Posterior vena cava (tissue), 2 donors: ENCODE measurements at regions of chr9 and their contacts with region 1.

Region 1: DNA sequence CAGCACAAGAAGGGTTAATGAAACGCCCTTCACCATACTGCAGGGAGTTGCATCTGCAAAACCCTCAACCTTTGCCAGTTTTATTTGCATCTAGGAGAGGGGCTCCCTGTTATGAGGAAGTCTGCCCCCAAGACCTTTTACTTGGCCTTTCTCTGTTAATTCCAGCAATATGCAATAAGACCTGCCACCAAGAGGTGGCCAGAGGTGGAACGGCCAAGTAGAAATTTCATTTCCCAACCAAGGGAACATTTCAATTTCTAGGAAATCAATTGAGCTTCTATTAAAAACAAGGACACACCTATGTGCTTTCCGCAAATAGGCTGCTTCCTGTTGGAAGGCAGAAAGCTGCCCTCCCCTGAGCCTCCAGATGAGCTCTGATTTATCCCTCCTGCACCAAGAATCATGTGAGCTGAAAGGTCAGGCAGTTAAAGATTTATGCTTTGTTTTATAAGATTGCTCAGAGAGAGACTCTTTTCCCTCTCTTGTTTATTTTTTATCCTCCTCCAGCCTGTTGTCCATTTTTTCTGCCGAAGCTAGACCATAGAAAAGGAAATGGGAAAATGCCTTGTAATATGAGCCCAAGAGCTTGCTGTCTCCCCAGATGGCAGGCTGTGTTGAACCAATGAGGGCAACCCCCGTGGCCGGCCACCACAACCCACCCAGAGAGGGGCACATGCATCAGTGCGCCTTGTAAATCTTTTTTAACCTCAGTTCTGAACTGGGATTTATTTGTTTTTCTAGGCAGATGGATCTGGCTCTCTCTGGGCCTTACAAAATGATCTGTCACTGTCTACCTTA is 572.8 kb downstream of the TLE1 start:
- DNase-seq: no peak

Region 2: GRCh38 chr9:79757881-79758669 is 1358.5 kb before region 1 on chr9:
- intact Hi-C with region 1: loop called in 1 of 2 experiments (anchors 5 kb)
- DNase-seq: no peak